ENCODE measurements at regions of chr15 and their contacts with region 1.

Region 1: DNA sequence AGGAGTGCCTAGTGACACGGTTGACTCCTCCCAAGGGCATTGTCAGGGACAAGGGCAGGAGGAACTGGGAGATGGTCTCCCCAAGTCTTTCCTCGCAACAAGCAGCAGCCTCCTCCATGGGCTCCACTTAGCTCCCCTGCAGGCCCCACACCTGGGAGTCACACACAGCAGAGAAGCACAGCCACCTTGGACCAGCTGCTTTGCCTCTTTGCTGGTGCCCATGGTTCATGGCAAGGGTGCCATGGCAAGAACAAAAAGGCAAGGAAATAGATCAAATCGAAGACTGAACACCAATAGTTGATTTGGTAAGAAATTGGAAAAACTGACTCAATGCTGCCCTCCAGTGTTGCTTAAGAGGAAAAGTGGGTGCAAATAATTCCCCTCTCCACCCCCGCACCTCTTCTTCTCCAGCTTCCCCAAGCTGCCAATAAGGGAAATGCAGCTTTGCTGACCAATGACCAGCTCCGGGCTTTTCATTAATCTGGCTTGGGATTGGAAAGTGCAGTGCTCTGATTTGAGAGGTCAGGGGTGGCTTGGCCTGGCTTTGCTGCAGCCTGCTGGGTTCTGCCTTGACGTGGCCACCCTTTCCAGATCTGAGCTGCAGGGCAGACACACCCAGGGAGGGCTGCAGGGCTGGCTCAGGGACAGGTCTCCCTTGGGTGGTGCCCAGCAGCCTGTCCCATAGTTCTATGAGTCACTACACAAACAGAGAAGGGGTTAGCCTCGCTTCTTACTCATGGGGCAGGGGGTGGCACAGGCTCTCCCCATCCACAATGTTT is 162.0 kb downstream of the KLF13 start:
- DNase-seq: peak in 4 of 5 donors; percentile 64 to 69 (median 66)
- H3K4me3 ChIP-seq: no peak overlapping the region
- H3K4me3 Mint-ChIP-seq: peak overlapping the region in 1 of 8 donors; percentile 30
- H3K27ac ChIP-seq: no peak overlapping the region
- H3K27ac Mint-ChIP-seq: peak overlapping the region in 5 of 7 donors; percentile 17 to 77 (median 72)
- H3K4me1 ChIP-seq: peaks cover 37% of the 10 kb centered on the region
- H3K4me1 Mint-ChIP-seq: peaks cover 14 to 51% (median 24%) of the 10 kb centered on the region in 4 donors
- H3K27me3 ChIP-seq: no peaks in the 10 kb centered on the region
- H3K27me3 Mint-ChIP-seq: no peaks in the 10 kb centered on the region

Region 2: DNA sequence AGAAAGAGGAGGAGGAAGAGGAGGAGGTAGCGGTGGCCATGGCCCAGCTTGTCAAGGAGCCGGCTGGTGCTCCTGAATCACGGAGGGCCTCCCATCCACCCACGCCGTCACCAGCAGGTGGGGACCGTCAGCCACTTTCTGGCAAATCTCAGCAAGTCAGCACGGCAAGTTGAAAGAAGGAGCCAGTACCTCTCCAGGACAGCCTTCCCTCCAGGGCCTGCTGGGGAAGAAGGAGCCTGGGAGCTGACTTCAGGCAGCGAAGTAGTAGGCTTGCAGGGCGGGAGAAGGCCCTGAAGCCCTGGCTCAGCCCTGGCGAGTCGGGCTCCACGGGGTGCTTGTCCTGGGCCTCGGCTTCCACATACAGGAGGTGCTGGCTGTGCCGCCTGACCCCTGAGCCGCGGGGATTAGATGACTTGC is 287.9 kb before region 1 on chr15:
- CTCF ChIA-PET with region 1: interaction called, 224 read pairs
- POLR2A ChIA-PET with region 1: interaction called, 19 read pairs
- intact Hi-C with region 1: loop called (anchors 1 kb)
- DNase-seq: peak; percentile 70 to 73 (median 71)
- H3K4me3 ChIP-seq: no peak overlapping the region
- H3K4me3 Mint-ChIP-seq: peak overlapping the region in 2 of 8 donors; percentile 20 to 26
- H3K27ac ChIP-seq: no peak overlapping the region
- H3K27ac Mint-ChIP-seq: peak overlapping the region in 4 of 7 donors; percentile 18 to 87 (median 38)
- H3K4me1 ChIP-seq: peaks cover 26% of the 10 kb centered on the region
- H3K4me1 Mint-ChIP-seq: peaks cover 9 to 30% (median 15%) of the 10 kb centered on the region in 4 donors
- H3K27me3 ChIP-seq: no peaks in the 10 kb centered on the region
- H3K27me3 Mint-ChIP-seq: no peaks in the 10 kb centered on the region

Region 3: GRCh38 chr15:31265871-31266711 is 222.5 kb before region 1 on chr15:
- CTCF ChIA-PET with region 1: interaction called, 46 read pairs
- POLR2A ChIA-PET with region 1: interaction called, 20 read pairs
- intact Hi-C with region 1: loop called (anchors 1 kb)
- DNase-seq: peak; percentile 76 to 84 (median 80)
- H3K4me3 ChIP-seq: peak overlapping the region in 1 of 2 donors; percentile 20
- H3K4me3 Mint-ChIP-seq: peak overlapping the region; percentile 1 to 86 (median 78)
- H3K27ac ChIP-seq: peak overlapping the region; percentile 70
- H3K27ac Mint-ChIP-seq: peak overlapping the region; percentile 70 to 99 (median 96)
- H3K4me1 ChIP-seq: peaks cover 75% of the 10 kb centered on the region
- H3K4me1 Mint-ChIP-seq: peaks cover 62 to 83% (median 74%) of the 10 kb centered on the region in 4 donors
- H3K27me3 ChIP-seq: no peaks in the 10 kb centered on the region
- H3K27me3 Mint-ChIP-seq: no peaks in the 10 kb centered on the region

Region 4: GRCh38 chr15:31352911-31353811 is 135.5 kb before region 1 on chr15:
- CTCF ChIA-PET with region 1: interaction called, 21 read pairs
- POLR2A ChIA-PET with region 1: interaction called, 21 read pairs
- intact Hi-C with region 1: no loop called
- DNase-seq: peak in 4 of 5 donors; percentile 42 to 72 (median 52)
- H3K4me3 ChIP-seq: peak overlapping the region; percentile 15 to 31
- H3K4me3 Mint-ChIP-seq: peak overlapping the region; percentile 76 to 92 (median 85)
- H3K27ac ChIP-seq: peak overlapping the region; percentile 74
- H3K27ac Mint-ChIP-seq: peak overlapping the region; percentile 91 to 99 (median 95)
- H3K4me1 ChIP-seq: peaks cover 100% of the 10 kb centered on the region
- H3K4me1 Mint-ChIP-seq: peaks cover 71 to 100% (median 91%) of the 10 kb centered on the region in 4 donors
- H3K27me3 ChIP-seq: no peaks in the 10 kb centered on the region
- H3K27me3 Mint-ChIP-seq: no peaks in the 10 kb centered on the region

Region 5: GRCh38 chr15:31391687-31392671 is 96.6 kb before region 1 on chr15:
- CTCF ChIA-PET with region 1: interaction called, 11 read pairs
- POLR2A ChIA-PET with region 1: interaction called, 18 read pairs
- intact Hi-C with region 1: loop called (anchors 2 kb)
- DNase-seq: peak; percentile 78 to 87 (median 79)
- H3K4me3 ChIP-seq: peak overlapping the region; percentile 65 to 77
- H3K4me3 Mint-ChIP-seq: peak overlapping the region; percentile 87 to 96 (median 92)
- H3K27ac ChIP-seq: peak overlapping the region; percentile 57
- H3K27ac Mint-ChIP-seq: peak overlapping the region; percentile 81 to 98 (median 93)
- H3K4me1 ChIP-seq: peaks cover 28% of the 10 kb centered on the region
- H3K4me1 Mint-ChIP-seq: peaks cover 28 to 60% (median 39%) of the 10 kb centered on the region in 4 donors
- H3K27me3 ChIP-seq: no peaks in the 10 kb centered on the region
- H3K27me3 Mint-ChIP-seq: no peaks in the 10 kb centered on the region

Region 6: GRCh38 chr15:31472636-31473384 is 15.8 kb before region 1 on chr15:
- CTCF ChIA-PET with region 1: interaction called, 115 read pairs
- POLR2A ChIA-PET with region 1: interaction called, 87 read pairs
- intact Hi-C with region 1: no loop called
- DNase-seq: peak; percentile 56 to 69 (median 62)
- H3K4me3 ChIP-seq: peak overlapping the region; percentile 12 to 41
- H3K4me3 Mint-ChIP-seq: peak overlapping the region; percentile 60 to 89 (median 79)
- H3K27ac ChIP-seq: peak overlapping the region; percentile 51
- H3K27ac Mint-ChIP-seq: peak overlapping the region; percentile 80 to 96 (median 94)
- H3K4me1 ChIP-seq: peaks cover 42% of the 10 kb centered on the region
- H3K4me1 Mint-ChIP-seq: peaks cover 31 to 57% (median 47%) of the 10 kb centered on the region in 4 donors
- H3K27me3 ChIP-seq: no peaks in the 10 kb centered on the region
- H3K27me3 Mint-ChIP-seq: no peaks in the 10 kb centered on the region

Region 7: DNA sequence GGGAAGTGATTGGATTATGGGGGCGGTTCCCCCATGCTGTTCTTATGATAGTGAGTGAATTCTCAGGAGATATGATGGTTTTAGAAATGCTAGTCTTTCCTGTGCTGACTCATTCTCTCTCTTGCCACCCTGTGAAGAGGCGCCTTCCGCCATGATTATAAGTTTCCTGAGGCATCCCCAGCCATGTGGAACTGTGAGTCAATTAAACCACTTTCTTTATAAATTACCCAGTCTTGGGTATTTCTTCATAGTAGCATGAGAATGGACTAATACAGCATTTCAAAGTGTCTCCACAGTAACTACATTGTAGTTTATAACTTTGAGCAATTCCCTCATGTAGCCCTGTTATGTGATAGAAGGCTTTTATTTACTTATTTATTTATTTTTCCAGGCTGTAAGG is 412.9 kb after region 1 on chr15:
- CTCF ChIA-PET with region 1: no interaction called
- POLR2A ChIA-PET with region 1: no interaction called
- intact Hi-C with region 1: no loop called
- DNase-seq: no peak
- H3K4me3 ChIP-seq: no peak overlapping the region
- H3K4me3 Mint-ChIP-seq: no peak overlapping the region
- H3K27ac ChIP-seq: no peak overlapping the region
- H3K27ac Mint-ChIP-seq: no peak overlapping the region
- H3K4me1 ChIP-seq: no peaks in the 10 kb centered on the region
- H3K4me1 Mint-ChIP-seq: no peaks in the 10 kb centered on the region
- H3K27me3 ChIP-seq: no peaks in the 10 kb centered on the region
- H3K27me3 Mint-ChIP-seq: peaks cover 2 to 20% of the 10 kb centered on the region in 2 donors

Measured in CD4-positive, alpha-beta memory T cell (primary cell).